ENCODE measurements at regions of chr14 and their contacts with region 1.

Region 1: DNA sequence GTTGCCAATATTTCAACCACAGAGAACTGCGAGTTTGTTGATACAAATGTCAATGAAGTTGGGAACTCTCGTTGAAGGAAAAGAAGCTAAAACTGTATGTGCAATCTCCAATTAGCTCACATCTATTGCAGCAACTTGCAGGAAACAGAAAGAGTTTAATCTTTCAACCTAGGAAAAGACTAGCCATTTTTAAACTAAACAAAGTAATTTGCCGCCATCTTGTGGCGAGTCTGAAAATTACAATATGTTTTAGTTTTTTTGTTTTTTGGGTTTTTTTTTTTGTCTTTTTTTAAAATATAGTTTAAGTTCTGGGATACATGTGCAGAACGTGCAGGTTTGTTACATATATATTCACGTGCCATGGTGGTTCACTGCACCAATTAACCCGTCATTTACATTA is 131.2 kb upstream of the FOXG1 start:
- DNase-seq: peak; percentile 65
- ATAC-seq: peak; percentile 78
- H3K4me3 ChIP-seq: no peak overlapping the region
- H3K27ac ChIP-seq: no peak overlapping the region
- H3K4me1 ChIP-seq: 0 out of 2 replicates have a peak, but pooled peaks cover 6% of the 10 kb centered on the region
- H3K27me3 ChIP-seq: no peaks in the 10 kb centered on the region
- CTCF ChIP-seq: peak; percentile 71; the same call in 1 of the 2 replicates

Region 2: DNA sequence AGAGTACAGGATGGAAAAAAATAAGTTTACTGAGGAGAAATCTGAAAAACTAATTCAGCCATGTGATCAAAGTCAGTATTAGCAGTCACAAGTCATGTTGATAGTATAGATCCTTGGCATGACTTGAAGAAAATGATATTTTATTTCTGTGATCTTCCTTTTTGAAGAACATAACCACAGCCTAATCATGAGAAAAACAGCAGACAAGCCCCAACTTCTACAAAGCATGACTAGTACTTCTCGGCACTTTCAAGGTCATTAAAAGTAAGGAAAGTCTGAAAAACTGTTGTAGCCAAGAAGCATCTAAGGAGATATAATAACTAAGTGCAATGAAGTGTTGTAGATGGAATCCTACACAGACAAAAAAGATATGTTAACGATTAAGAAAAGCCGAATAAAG is 132.9 kb before region 1 on chr14:
- CTCF ChIA-PET with region 1: no interaction called
- POLR2A ChIA-PET with region 1: no interaction called
- intact Hi-C with region 1: no loop called
- DNase-seq: no peak
- ATAC-seq: no peak
- H3K4me3 ChIP-seq: no peak overlapping the region
- H3K27ac ChIP-seq: no peak overlapping the region
- H3K4me1 ChIP-seq: no peaks in the 10 kb centered on the region
- H3K27me3 ChIP-seq: no peaks in the 10 kb centered on the region
- CTCF ChIP-seq: no peak

Region 3: DNA sequence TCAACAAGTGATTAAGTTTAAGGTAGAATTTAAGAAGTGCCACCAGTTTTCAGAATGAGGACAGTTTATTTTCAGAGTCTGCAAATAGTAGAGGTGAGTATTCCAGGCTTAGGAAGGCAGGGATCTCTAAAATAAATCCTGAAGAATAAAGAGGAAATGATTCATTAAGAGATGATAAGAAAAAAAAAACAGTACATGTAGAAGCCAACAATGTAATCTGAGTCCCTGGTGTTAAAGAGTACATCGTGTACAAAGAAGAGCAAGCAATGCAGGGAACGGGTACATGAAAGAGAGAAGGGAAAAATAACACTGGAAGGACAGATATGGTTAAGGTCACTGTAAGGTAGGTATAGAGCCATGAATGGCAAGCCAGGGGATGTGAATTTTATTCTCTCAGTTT is 36.0 kb after region 1 on chr14:
- CTCF ChIA-PET with region 1: no interaction called
- POLR2A ChIA-PET with region 1: no interaction called
- intact Hi-C with region 1: no loop called
- DNase-seq: peak; percentile 60
- ATAC-seq: peak; percentile 73
- H3K4me3 ChIP-seq: 0 out of 2 replicates have a peak overlapping the region, but pooled peaks have one; percentile 3
- H3K27ac ChIP-seq: peak overlapping the region; percentile 15; the same call in 1 of the 2 replicates
- H3K4me1 ChIP-seq: peaks cover 50% of the 10 kb centered on the region
- H3K27me3 ChIP-seq: no peaks in the 10 kb centered on the region
- CTCF ChIP-seq: no peak

Region 4: GRCh38 chr14:28681683-28682082 is 46.3 kb after region 1 on chr14:
- CTCF ChIA-PET with region 1: no interaction called
- POLR2A ChIA-PET with region 1: no interaction called
- intact Hi-C with region 1: no loop called
- DNase-seq: peak; percentile 43
- ATAC-seq: peak; percentile 61
- H3K4me3 ChIP-seq: no peak overlapping the region
- H3K27ac ChIP-seq: no peak overlapping the region
- H3K4me1 ChIP-seq: peaks cover 31% of the 10 kb centered on the region
- H3K27me3 ChIP-seq: no peaks in the 10 kb centered on the region
- CTCF ChIP-seq: peak; percentile 61

Region 5: GRCh38 chr14:28751467-28752058 is 116.2 kb after region 1 on chr14:
- CTCF ChIA-PET with region 1: no interaction called
- POLR2A ChIA-PET with region 1: no interaction called
- intact Hi-C with region 1: loop called (anchors 5 kb)
- DNase-seq: peak; percentile 81
- ATAC-seq: peak; percentile 90
- H3K4me3 ChIP-seq: no peak overlapping the region
- H3K27ac ChIP-seq: no peak overlapping the region
- H3K4me1 ChIP-seq: no peaks in the 10 kb centered on the region
- H3K27me3 ChIP-seq: peaks cover 23% of the 10 kb centered on the region
- CTCF ChIP-seq: peak; percentile 84